Breast epithelium (tissue), 4 donors: ENCODE measurements at regions of chr4 and their contacts with region 1.

Region 1: DNA sequence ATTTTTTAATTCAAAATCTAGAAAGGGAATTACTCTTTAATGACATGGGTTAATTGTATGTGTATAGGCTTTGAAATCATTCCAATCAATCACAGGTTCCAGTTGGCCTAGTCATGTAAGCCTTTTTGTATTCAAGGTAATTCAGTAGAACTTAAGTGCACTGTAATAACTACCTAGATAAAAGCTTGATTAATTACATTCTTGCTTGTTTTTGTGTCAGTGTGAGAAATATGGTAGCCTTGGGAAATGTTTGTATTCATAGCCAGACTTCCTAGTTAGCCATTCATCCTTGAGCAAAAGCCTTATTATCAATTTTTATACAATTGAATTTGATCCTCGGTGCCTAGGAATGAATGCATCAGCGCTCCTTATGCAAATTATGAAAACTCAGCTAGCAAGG is 33.5 kb downstream of the TKTL2 start:
- DNase-seq: no peak
- H3K4me3 ChIP-seq: no peak overlapping the region
- H3K27ac ChIP-seq: no peak overlapping the region
- H3K4me1 ChIP-seq: no peaks in the 10 kb centered on the region
- H3K27me3 ChIP-seq: no peaks in the 10 kb centered on the region
- CTCF ChIP-seq: no peak
- POLR2A ChIP-seq: no peak

Region 2: DNA sequence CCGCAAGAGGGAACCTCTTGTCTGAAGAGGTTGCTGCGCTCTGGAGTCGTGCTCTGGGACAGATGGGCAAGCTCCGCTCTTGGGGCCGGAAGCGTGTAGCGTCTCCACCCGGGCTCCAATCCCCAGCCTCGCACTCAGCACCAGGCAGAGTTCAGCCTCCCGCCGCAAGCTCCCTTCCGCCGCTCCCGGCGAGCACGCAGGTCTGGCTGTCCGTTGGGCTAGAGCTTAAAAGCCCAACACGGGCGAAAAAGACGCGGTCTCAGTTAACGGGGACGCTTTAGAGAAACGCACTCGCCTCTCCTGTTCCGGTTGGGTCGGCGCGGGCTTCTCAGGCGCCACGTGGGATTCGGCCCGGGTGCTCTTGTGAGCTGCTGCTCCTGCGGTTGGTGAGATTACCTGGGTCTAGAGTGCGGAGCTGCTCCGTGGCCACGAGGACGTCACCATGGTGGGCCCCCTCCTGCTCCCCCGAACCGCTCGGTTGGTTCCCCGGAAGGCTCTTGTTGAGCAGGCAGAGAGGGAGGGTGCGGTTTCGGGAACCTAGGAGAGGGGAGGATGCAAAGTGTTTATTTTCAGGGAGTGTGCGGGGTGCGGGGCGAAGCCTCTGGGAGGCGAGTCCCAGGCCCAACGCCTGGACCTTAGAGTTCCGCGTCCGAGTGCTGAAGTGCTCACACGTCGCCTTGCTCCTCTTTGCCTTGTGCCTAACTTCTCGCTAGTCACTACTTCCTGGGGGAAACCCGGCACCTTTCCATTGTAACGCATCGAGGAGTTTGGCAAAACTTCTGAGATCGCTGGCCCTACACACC is 54.5 kb after region 1 on chr4 and contains the start of gene TMA16:
- intact Hi-C with region 1: loop called (anchors 2 kb)
- DNase-seq: peak; percentile 64 to 78
- H3K4me3 ChIP-seq: peak within 1 kb of the TSS; percentile 74 to 87 (median 78)
- H3K27ac ChIP-seq: peak within 1 kb of the TSS; percentile 87 to 92
- H3K4me1 ChIP-seq: no peaks in the 10 kb centered on the region
- H3K27me3 ChIP-seq: no peaks in the 10 kb centered on the region
- CTCF ChIP-seq: no peak
- POLR2A ChIP-seq: no peak
- total RNA-seq, gene TMA16: 28.2 to 34.7 (median 30.1) TPM

Region 3: DNA sequence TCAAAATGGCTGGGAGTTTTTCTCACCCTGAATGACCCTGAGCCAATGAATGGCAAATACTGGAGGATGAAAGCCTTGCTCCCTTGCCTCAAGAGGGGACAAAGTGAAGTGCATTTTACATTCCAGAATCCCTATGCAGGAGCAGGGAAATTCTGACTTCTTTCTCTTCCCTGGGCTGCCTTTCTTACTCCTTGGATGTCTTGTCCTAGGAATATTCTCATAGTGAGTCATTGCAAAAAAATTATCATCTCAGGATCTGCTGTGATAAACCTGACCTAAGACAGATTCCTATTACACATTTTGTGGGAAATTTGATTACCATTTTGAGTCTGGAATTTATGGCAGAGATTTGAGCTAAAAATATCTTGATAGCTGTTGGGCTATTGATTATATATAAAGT is 254.3 kb after region 1 on chr4:
- intact Hi-C with region 1: no loop called
- DNase-seq: no peak
- H3K4me3 ChIP-seq: no peak overlapping the region
- H3K27ac ChIP-seq: no peak overlapping the region
- H3K4me1 ChIP-seq: no peaks in the 10 kb centered on the region
- H3K27me3 ChIP-seq: no peaks in the 10 kb centered on the region
- CTCF ChIP-seq: no peak
- POLR2A ChIP-seq: no peak